ENCODE measurements at regions of chr10 and their contacts with region 1.

Region 1: GRCh38 chr10:72331601-72332422 is 22.9 kb downstream of the DNAJB12 start:
- DNase-seq: peak; percentile 87 to 94 (median 90)
- ATAC-seq: peak; percentile 30 to 72 (median 64)
- H3K4me3 ChIP-seq: peak overlapping the region in 6 of 12 donors; percentile 8 to 26 (median 12)
- H3K27ac ChIP-seq: peak overlapping the region in 11 of 12 donors; percentile 50 to 98 (median 88)
- H3K4me1 ChIP-seq: peaks cover 15 to 98% (median 77%) of the 10 kb centered on the region in 12 donors
- H3K27me3 ChIP-seq: no peaks in the 10 kb centered on the region
- CTCF ChIP-seq: peak in 10 of 12 donors; percentile 11 to 41 (median 24)
- POLR2A ChIP-seq: peak in 1 of 2 donors; percentile 43

Region 2: GRCh38 chr10:71957546-71958275 is 374.1 kb before region 1 on chr10:
- intact Hi-C with region 1: loop called in 6 of 10 experiments (anchors 2 to 5 kb)
- DNase-seq: no peak
- ATAC-seq: no peak
- H3K4me3 ChIP-seq: no peak overlapping the region
- H3K27ac ChIP-seq: no peak overlapping the region
- H3K4me1 ChIP-seq: peaks cover 0 to 12% (median 7%) of the 10 kb centered on the region in 12 donors
- H3K27me3 ChIP-seq: no peaks in the 10 kb centered on the region
- CTCF ChIP-seq: no peak
- POLR2A ChIP-seq: no peak

Region 3: DNA sequence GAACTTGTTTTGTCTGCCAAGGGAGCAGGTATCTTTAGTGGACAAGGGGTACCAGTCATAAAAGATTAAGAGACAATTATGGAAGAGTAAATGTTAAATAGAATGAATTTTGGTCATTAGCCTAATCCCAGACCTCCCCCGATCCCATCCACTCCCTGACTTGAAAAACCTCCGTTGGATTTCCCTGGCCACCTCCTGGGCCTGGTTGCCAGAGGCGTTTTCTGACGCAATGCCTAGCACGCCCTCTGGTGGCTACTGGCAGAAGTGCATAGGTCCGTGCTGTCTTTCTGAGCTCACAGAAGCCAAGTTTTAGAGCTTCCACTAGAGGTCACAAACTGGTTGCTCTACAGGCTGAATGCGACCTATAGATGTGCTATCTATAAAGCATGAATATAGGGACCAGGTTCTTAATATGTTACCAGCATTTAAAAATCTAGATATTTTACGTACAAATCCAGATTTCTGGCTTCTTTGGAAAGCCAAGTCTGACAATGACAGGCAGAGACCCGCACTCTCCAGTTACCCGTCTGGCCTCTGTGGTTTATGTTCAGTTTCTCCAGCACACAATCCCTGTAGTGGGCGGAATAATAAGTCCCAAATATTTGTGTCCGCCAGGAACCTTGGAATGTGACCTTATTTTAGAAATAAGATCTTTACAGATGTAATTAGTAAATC is 283.2 kb before region 1 on chr10:
- intact Hi-C with region 1: loop called in 9 of 10 experiments (anchors 2 to 5 kb)
- DNase-seq: peak; percentile 89 to 93 (median 92)
- ATAC-seq: peak; percentile 34 to 83 (median 78)
- H3K4me3 ChIP-seq: no peak overlapping the region
- H3K27ac ChIP-seq: peak overlapping the region in 1 of 12 donors; percentile 11
- H3K4me1 ChIP-seq: peaks cover 0 to 17% (median 0%) of the 10 kb centered on the region in 12 donors
- H3K27me3 ChIP-seq: no peaks in the 10 kb centered on the region
- CTCF ChIP-seq: peak; percentile 99 to 100 (median 99)
- POLR2A ChIP-seq: no peak

Region 4: GRCh38 chr10:72126184-72126871 is 205.5 kb before region 1 on chr10:
- intact Hi-C with region 1: loop called in 7 of 10 experiments (anchors 5 to 10 kb)
- DNase-seq: no peak
- ATAC-seq: no peak
- H3K4me3 ChIP-seq: no peak overlapping the region
- H3K27ac ChIP-seq: no peak overlapping the region
- H3K4me1 ChIP-seq: peaks cover 0 to 15% (median 4%) of the 10 kb centered on the region in 12 donors
- H3K27me3 ChIP-seq: no peaks in the 10 kb centered on the region
- CTCF ChIP-seq: peak in 10 of 12 donors; percentile 16 to 56 (median 34)
- POLR2A ChIP-seq: no peak

Region 5: GRCh38 chr10:72223743-72224101 is 108.1 kb before region 1 on chr10:
- intact Hi-C with region 1: loop called in 4 of 10 experiments (anchors 2 to 5 kb)
- DNase-seq: no peak
- ATAC-seq: peak; percentile 13 to 61 (median 32)
- H3K4me3 ChIP-seq: no peak overlapping the region
- H3K27ac ChIP-seq: peak overlapping the region in 11 of 12 donors; percentile 14 to 78 (median 58)
- H3K4me1 ChIP-seq: peaks cover 0 to 57% (median 21%) of the 10 kb centered on the region in 12 donors
- H3K27me3 ChIP-seq: no peaks in the 10 kb centered on the region
- CTCF ChIP-seq: no peak
- POLR2A ChIP-seq: no peak

Region 6: GRCh38 chr10:72254813-72255568 is 76.8 kb before region 1 on chr10:
- intact Hi-C with region 1: loop called in 2 of 10 experiments (anchors 5 kb)
- DNase-seq: peak; percentile 87 to 96 (median 93)
- ATAC-seq: peak; percentile 92 to 95 (median 92)
- H3K4me3 ChIP-seq: peak overlapping the region in 7 of 12 donors; percentile 4 to 31 (median 23)
- H3K27ac ChIP-seq: peak overlapping the region; percentile 74 to 97 (median 94)
- H3K4me1 ChIP-seq: peaks cover 34 to 96% (median 78%) of the 10 kb centered on the region in 12 donors
- H3K27me3 ChIP-seq: no peaks in the 10 kb centered on the region
- CTCF ChIP-seq: peak in 3 of 12 donors; percentile 8 to 23 (median 13)
- POLR2A ChIP-seq: peak in 1 of 2 donors; percentile 67

Region 7: GRCh38 chr10:72273410-72274212 is 58.2 kb before region 1 on chr10 and contains the start of gene DDIT4:
- intact Hi-C with region 1: loop called in 6 of 10 experiments (anchors 2 to 10 kb)
- DNase-seq: peak; percentile 99 to 100 (median 100)
- ATAC-seq: peak; percentile 91 to 94 (median 92)
- H3K4me3 ChIP-seq: peak within 1 kb of the TSS; percentile 66 to 98 (median 76)
- H3K27ac ChIP-seq: peak within 1 kb of the TSS; percentile 95 to 100 (median 99)
- H3K4me1 ChIP-seq: peaks cover 6 to 54% (median 34%) of the 10 kb centered on the region in 12 donors
- H3K27me3 ChIP-seq: no peaks in the 10 kb centered on the region
- CTCF ChIP-seq: no peak
- POLR2A ChIP-seq: peak; percentile 99 to 100
- total RNA-seq, gene DDIT4: 14.6 to 68.2 (median 40.4) TPM